Activated B cell treated with CpG ODN at 0.5 μM for 24 hours (primary cell): ENCODE measurements at regions of chr13 and their contacts with region 1.

Region 1: GRCh38 chr13:25267715-25268114 is 19.6 kb downstream of the MTMR6 start:
- DNase-seq: no peak
- ATAC-seq: peak; percentile 58
- H3K4me3 Mint-ChIP-seq: no peak overlapping the region
- H3K27ac Mint-ChIP-seq: no peak overlapping the region
- H3K4me1 Mint-ChIP-seq: no peaks in the 10 kb centered on the region
- H3K27me3 Mint-ChIP-seq: no peaks in the 10 kb centered on the region
- CTCF ChIP-seq: no peak

Region 2: DNA sequence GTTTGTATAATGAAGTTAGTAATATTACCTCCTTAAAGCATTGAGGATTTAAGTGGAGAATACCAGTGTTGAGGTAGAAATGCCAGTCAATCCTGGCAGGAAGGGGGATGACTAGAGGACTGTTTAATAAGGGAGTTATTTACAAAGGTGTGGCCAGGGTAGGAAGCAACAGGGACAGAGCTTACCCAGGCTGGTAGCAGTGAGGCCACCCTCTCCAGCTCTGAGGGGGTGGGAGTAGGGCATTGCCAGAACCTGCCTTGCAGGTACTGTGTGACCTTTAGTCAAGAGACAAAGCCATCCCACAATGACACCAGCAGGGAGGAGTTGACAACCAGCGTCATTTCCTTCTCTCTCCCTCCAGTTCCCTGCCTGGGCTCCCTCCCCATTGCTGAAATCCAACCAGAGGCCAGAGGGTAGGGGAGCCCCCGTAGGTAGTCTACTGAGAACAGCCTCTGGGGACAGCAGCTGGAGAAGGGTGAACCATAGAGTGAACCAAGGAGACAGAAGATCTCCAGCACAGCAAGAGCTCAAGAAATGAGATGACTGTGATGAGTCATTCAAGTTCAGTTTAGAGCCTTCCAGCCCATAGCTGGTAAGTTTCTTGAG is 1140.6 kb before region 1 on chr13:
- CTCF ChIA-PET with region 1: no interaction called
- POLR2A ChIA-PET with region 1: no interaction called
- intact Hi-C with region 1: no loop called
- DNase-seq: no peak
- ATAC-seq: peak; percentile 25
- H3K4me3 Mint-ChIP-seq: no peak overlapping the region
- H3K27ac Mint-ChIP-seq: no peak overlapping the region
- H3K4me1 Mint-ChIP-seq: peaks cover 15% of the 10 kb centered on the region
- H3K27me3 Mint-ChIP-seq: peaks cover 34% of the 10 kb centered on the region
- CTCF ChIP-seq: no peak

Region 3: GRCh38 chr13:25310891-25311290 is 43.2 kb after region 1 on chr13:
- CTCF ChIA-PET with region 1: no interaction called
- POLR2A ChIA-PET with region 1: interaction called, 11 read pairs
- intact Hi-C with region 1: no loop called
- DNase-seq: no peak
- ATAC-seq: no peak
- H3K4me3 Mint-ChIP-seq: no peak overlapping the region
- H3K27ac Mint-ChIP-seq: no peak overlapping the region
- H3K4me1 Mint-ChIP-seq: no peaks in the 10 kb centered on the region
- H3K27me3 Mint-ChIP-seq: no peaks in the 10 kb centered on the region
- CTCF ChIP-seq: no peak